ENCODE measurements at regions of chr19 and their contacts with region 1.

Region 1: GRCh38 chr19:33508941-33509614 is 12.5 kb downstream of the PEPD start:
- DNase-seq: no peak
- H3K4me3 ChIP-seq: no peak overlapping the region
- H3K27ac ChIP-seq: peak overlapping the region in 1 of 2 experiments; percentile 97; a peak in 2 of 4 replicates
- H3K4me1 ChIP-seq: peaks cover 0 to 63% of the 10 kb centered on the region in 2 experiments; a peak in 2 of 4 replicates
- H3K27me3 ChIP-seq: no peaks in the 10 kb centered on the region
- CTCF ChIP-seq: no peak
- EP300 ChIP-seq: no peak
- RAD21 ChIP-seq: no peak

Region 2: DNA sequence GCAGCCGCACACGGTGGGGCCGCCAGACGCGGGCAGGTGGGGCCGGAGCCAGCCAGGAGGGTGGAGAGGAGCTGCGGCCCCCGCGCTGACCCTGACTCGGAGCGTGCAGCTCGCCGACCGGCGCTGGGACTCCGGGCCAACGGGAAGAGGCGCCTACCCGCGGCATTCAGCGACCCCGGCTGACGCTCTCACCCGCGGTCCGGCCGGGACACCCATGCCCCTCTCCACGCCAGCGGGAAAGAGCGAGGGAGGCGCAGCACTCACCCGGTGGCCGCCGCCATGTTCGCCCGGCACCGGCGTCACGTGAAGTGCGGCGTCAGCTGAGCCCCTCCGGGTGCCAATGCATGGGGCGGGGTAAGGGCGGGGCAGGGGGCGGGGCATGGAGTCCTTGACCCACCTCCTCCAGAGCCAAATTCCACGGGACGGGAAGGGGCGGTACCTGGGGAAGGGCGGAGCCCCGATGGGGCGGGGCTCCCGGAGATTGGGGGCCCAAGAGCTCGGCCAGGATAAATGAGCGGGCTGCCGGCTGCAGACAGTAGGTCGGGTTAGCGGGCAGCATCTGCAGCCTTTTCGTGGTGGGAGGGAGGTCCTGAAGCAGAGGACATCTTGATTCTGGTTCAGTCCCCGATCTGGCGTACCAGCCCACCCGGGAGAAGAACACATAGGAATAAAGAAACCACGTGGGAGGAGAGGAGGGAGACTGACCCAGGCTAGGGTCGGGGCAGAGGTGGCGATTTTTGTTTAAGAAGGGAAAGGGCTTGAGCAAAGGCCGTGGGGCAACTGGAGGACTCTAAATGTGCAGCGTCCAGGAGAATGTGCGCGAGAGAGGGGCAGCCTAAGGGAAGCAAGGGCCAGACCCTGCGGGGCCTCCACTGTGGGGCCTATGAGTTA is 12.6 kb after region 1 on chr19 and contains the start of gene PEPD:
- CTCF ChIA-PET with region 1: interaction called, 4 read pairs
- POLR2A ChIA-PET with region 1: interaction called, 17 read pairs
- DNase-seq: peak; percentile 100
- H3K4me3 ChIP-seq: peak within 1 kb of the TSS; percentile 86 to 93
- H3K27ac ChIP-seq: peak within 1 kb of the TSS in 1 of 2 experiments; percentile 67; a peak in 2 of 4 replicates
- H3K4me1 ChIP-seq: peaks cover 0 to 21% of the 10 kb centered on the region in 2 experiments; a peak in 2 of 4 replicates
- H3K27me3 ChIP-seq: no peaks in the 10 kb centered on the region
- CTCF ChIP-seq: no peak
- EP300 ChIP-seq: no peak
- RAD21 ChIP-seq: no peak
- polyA plus RNA-seq, gene PEPD: 88.9 and 92.4 TPM in 2 replicates

Region 3: GRCh38 chr19:33553530-33554310 is 44.6 kb after region 1 on chr19:
- CTCF ChIA-PET with region 1: no interaction called
- POLR2A ChIA-PET with region 1: no interaction called
- DNase-seq: no peak
- H3K4me3 ChIP-seq: no peak overlapping the region
- H3K27ac ChIP-seq: no peak overlapping the region
- H3K4me1 ChIP-seq: no peaks in the 10 kb centered on the region
- H3K27me3 ChIP-seq: no peaks in the 10 kb centered on the region
- CTCF ChIP-seq: no peak
- EP300 ChIP-seq: no peak
- RAD21 ChIP-seq: no peak

Measured in SK-N-SH (cell line).